Lower leg skin (tissue), 4 donors: ENCODE measurements at regions of chr6 and their contacts with region 1.

Region 1: GRCh38 chr6:49606696-49607390 is 29.8 kb downstream of the RHAG start:
- DNase-seq: no peak
- H3K4me3 ChIP-seq: no peak overlapping the region
- CTCF ChIP-seq: no peak
- POLR2A ChIP-seq: no peak

Region 2: GRCh38 chr6:49535795-49536194 is 71.0 kb before region 1 on chr6:
- intact Hi-C with region 1: loop called (anchors 5 kb)
- DNase-seq: no peak
- H3K4me3 ChIP-seq: no peak overlapping the region
- CTCF ChIP-seq: no peak
- POLR2A ChIP-seq: no peak

Region 3: DNA sequence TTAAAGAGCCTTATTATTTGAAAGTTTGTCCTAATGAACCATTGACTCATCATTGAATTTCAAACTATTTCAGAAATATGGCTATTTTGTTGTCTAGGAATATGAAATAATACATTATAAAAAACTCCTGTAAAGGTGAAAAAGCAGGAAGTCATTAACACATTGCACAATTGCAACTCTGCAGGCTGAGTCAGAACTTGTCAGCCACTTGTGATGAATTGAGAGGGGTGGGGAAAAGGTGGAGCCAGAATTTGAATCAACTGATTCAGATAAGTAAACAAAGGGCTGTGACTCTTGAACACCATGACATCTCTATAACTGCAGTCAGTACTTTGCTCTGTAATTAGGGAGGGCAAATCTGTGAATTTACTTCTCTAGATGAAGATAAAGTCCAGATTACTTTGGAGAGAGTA is 50.4 kb before region 1 on chr6:
- intact Hi-C with region 1: no loop called
- DNase-seq: peak in 1 of 2 donors; percentile 47
- H3K4me3 ChIP-seq: no peak overlapping the region
- CTCF ChIP-seq: no peak
- POLR2A ChIP-seq: no peak

Region 4: GRCh38 chr6:49625140-49625539 is 18.3 kb after region 1 on chr6:
- intact Hi-C with region 1: no loop called
- DNase-seq: no peak
- H3K4me3 ChIP-seq: no peak overlapping the region
- CTCF ChIP-seq: no peak
- POLR2A ChIP-seq: no peak